ENCODE measurements at regions of chr16 and their contacts with region 1.

Region 1: DNA sequence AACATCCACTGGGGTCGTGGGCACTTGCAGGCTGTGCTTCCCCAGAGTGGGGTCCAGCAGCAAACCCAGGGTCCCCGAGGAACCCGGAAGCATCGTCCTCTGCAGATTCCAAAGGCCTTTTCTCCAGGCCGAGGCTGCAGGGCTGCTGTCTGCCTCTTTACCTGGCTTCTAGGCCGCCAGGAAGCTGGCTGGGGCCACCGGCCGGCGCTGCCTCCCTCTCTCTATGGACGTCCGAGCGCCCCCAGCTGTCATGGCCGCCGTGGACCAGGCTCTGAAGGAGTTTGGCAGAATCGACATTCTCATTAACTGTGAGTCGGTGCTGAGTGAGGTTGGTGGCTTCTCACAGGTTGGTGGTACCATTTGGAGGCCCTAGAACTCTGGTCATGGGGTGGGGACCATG is 5.6 kb downstream of the DECR2 start:
- DNase-seq: no peak

Region 2: GRCh38 chr16:339680-340079 is 67.6 kb before region 1 on chr16:
- intact Hi-C with region 1: no loop called
- DNase-seq: no peak

Region 3: GRCh38 chr16:440627-441026 is 33.4 kb after region 1 on chr16:
- intact Hi-C with region 1: loop called in 1 of 2 experiments (anchors 1 kb)
- DNase-seq: no peak

Measured in posterior vena cava (tissue), 2 donors.